ENCODE measurements at regions of chr9 and their contacts with region 1.

Region 1: DNA sequence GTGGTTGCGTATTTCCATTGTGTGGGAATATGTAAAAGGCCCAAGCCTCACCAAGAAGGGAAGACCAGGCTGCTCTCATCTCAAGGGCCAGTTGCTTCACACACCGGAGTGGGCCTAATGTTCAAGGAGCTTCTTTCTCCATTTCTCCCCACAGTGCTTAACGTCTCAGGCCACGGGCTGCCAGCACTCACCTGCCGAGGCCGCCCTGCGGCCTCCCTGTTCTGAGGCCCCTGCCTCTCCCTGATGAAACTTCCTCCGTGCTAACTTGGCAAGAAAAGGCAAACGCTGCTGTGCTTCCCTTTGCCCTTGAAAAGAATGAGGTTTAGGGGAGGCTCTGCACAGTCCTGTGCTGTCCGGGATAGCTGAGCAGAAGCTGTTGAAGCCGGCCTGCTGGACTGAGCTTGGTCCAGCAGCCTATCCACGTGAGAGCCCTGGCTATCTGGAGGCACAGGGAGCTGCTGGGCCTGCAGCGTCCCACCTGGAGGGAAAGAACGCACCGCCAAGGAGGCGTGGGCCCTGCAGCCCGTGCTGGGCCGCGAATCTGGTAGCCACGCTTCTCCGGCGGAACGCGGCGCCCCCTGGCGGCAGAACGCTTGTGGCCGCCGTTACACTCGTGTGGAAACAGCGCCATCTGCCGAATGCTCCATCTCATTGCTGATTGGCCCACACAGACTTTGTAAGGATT is 73.5 kb upstream of the PRSS3 start:
- DNase-seq: peak; percentile 66 to 91
- ATAC-seq: peak; percentile 86 to 87
- H3K4me3 ChIP-seq: no peak overlapping the region
- H3K27ac ChIP-seq: peak overlapping the region; percentile 50 to 75; a peak in 4 of 6 replicates
- H3K4me1 ChIP-seq: peaks cover 7% of the 10 kb centered on the region; the same call in 1 of the 3 replicates
- CTCF ChIP-seq: peak; percentile 100
- EP300 ChIP-seq: no peak
- POLR2A ChIP-seq: no peak
- RAD21 ChIP-seq: peak; percentile 100

Region 2: DNA sequence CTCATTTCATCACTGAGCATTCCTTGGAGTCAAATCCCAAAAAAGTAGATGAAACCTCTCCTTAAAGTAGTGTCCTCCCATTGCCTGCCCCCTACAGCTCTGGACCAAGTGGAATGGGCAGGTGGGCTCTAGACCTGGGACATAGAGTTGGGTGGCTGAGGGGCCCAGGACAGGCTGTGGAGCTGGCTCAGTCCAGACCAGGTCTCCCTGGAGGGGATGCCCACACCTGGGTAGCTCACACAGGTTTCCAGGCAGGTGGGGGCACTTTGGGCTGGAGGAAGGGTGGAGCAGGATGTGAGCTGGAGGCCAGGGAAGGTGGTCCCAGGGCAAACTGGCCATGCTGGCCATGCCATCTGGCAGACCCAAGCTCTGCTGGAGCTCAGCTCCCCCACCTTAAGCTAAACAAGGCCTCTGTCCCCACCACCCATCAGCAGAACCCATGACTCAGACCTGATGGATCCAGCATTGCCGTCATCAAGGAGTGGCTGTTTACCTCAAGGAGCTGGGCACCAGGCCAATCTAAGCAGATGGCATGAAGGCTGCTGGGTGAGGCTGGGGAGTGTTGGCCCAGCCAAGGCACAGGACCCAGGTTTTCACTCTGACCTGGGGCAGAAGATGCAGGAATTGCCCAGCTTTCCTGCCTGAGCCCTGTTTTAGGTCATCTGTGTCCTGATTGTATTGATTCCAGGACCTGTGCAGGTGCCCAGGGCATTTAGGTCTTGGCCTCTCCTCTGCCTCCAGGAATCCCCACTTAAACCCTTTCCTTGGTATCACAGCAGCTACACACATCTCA is 487.9 kb before region 1 on chr9:
- CTCF ChIA-PET with region 1: interaction called, 33 read pairs
- POLR2A ChIA-PET with region 1: no interaction called
- DNase-seq: peak; percentile 97 to 100
- ATAC-seq: peak; percentile 86
- H3K4me3 ChIP-seq: no peak overlapping the region
- H3K27ac ChIP-seq: peak overlapping the region; percentile 96 to 99
- H3K4me1 ChIP-seq: peaks cover 61% of the 10 kb centered on the region
- CTCF ChIP-seq: no peak
- EP300 ChIP-seq: peak; percentile 92 to 95; a peak in 4 of 5 replicates
- POLR2A ChIP-seq: peak; percentile 37; the same call in 1 of the 2 replicates
- RAD21 ChIP-seq: peak; percentile 32 to 53; a peak in 4 of 5 replicates

Region 3: GRCh38 chr9:33623658-33624586 is 97.9 kb before region 1 on chr9:
- CTCF ChIA-PET with region 1: interaction called, 471 read pairs
- POLR2A ChIA-PET with region 1: interaction called, 4 read pairs
- DNase-seq: peak; percentile 82 to 90
- ATAC-seq: peak; percentile 94 to 96
- H3K4me3 ChIP-seq: no peak overlapping the region
- H3K27ac ChIP-seq: peak overlapping the region; percentile 11 to 52; a peak in 2 of 6 replicates
- H3K4me1 ChIP-seq: peaks cover 23% of the 10 kb centered on the region
- CTCF ChIP-seq: peak; percentile 92
- EP300 ChIP-seq: no peak
- POLR2A ChIP-seq: no peak
- RAD21 ChIP-seq: peak; percentile 93

Region 4: DNA sequence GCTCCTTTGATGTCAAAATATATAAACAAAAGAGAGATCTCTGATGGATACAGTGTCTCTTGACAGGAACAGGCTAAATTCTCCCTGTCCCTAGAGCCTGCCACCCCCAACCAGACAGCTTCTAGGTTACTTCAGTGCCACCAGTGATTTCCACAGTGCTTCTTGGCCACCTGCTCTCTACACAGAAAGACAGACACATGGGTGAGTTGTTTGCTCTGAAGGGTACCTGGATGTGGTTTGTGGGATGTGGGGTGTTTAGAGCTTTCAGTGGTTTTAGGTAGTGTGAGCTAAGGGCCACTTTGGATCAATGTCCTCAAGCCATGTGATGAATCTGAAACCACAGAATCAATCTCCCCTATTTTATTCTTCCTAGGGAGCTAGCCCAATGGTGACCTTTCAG is 72.4 kb before region 1 on chr9:
- CTCF ChIA-PET with region 1: interaction called, 10 read pairs
- POLR2A ChIA-PET with region 1: no interaction called
- DNase-seq: no peak
- ATAC-seq: no peak
- H3K4me3 ChIP-seq: no peak overlapping the region
- H3K27ac ChIP-seq: no peak overlapping the region
- H3K4me1 ChIP-seq: no peaks in the 10 kb centered on the region
- CTCF ChIP-seq: no peak
- EP300 ChIP-seq: no peak
- POLR2A ChIP-seq: no peak
- RAD21 ChIP-seq: no peak

Region 5: DNA sequence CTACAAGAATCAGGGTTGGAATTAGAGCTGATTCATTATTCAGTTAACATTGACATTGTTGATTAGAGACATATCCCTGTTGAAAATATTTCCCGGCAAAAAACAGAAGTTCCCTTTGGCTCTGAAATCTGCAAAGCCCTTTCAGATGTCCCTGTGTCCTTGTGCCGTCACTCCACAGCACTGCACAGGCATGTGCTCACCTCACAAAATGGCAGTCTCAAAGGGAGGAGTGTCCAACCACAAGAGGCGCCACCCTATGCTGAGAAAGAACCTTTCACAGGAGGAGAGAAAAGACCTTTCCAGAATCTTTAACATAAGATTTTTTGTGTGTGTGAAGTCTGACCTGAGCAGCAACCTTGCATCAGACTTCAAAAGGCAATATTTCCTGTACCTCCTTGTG is 39.3 kb before region 1 on chr9:
- CTCF ChIA-PET with region 1: interaction called, 15 read pairs
- POLR2A ChIA-PET with region 1: no interaction called
- DNase-seq: no peak
- ATAC-seq: no peak
- H3K4me3 ChIP-seq: no peak overlapping the region
- H3K27ac ChIP-seq: no peak overlapping the region
- H3K4me1 ChIP-seq: peaks cover 3% of the 10 kb centered on the region
- CTCF ChIP-seq: no peak
- EP300 ChIP-seq: no peak
- POLR2A ChIP-seq: no peak
- RAD21 ChIP-seq: no peak

Region 6: GRCh38 chr9:33695856-33696255 is 26.0 kb before region 1 on chr9:
- CTCF ChIA-PET with region 1: interaction called, 18 read pairs
- POLR2A ChIA-PET with region 1: no interaction called
- DNase-seq: no peak
- ATAC-seq: no peak
- H3K4me3 ChIP-seq: no peak overlapping the region
- H3K27ac ChIP-seq: no peak overlapping the region
- H3K4me1 ChIP-seq: no peaks in the 10 kb centered on the region
- CTCF ChIP-seq: no peak
- EP300 ChIP-seq: no peak
- POLR2A ChIP-seq: no peak
- RAD21 ChIP-seq: no peak

Region 7: GRCh38 chr9:33737811-33738606 is 16.2 kb after region 1 on chr9:
- CTCF ChIA-PET with region 1: interaction called, 11 read pairs
- POLR2A ChIA-PET with region 1: no interaction called
- DNase-seq: peak; percentile 47 to 81
- ATAC-seq: peak; percentile 95 to 99
- H3K4me3 ChIP-seq: no peak overlapping the region
- H3K27ac ChIP-seq: peak overlapping the region in 1 of 2 experiments; percentile 38; a peak in 2 of 6 replicates
- H3K4me1 ChIP-seq: 0 out of 3 replicates have a peak, but pooled peaks cover 5% of the 10 kb centered on the region
- CTCF ChIP-seq: peak; percentile 88
- EP300 ChIP-seq: no peak
- POLR2A ChIP-seq: no peak
- RAD21 ChIP-seq: peak; percentile 85 to 89

Region 8: DNA sequence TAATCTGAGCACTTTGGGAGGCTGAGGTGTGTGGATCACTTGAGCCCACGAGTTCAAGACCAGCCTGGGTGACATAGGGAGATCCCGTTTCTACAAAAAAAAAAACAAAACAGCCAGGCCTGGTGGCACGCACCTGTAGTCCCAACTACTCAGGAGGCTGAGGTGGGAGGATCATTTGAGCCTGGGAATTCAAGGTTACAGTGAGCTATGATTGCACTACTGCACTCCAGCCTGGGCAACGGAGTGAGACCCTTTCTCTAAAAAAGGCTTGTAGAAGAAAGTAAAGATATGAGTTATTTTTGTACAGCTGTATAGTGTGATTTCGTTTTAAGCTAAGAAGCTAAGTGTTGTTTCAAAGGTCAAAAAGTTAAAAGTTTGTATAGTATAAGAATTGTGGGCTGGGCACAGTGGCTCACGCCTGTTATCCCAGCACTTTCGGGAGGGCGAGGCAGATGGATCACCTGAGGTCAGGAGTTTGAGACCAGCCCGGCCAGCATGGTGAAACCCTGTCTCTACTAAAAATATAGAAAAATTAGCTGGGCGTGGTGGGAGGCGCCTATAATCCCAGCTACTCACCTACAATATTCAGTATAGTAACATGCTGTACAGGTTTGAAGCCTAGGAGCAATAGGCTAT is 113.9 kb after region 1 on chr9:
- CTCF ChIA-PET with region 1: no interaction called
- POLR2A ChIA-PET with region 1: no interaction called
- DNase-seq: no peak
- ATAC-seq: no peak
- H3K4me3 ChIP-seq: no peak overlapping the region
- H3K27ac ChIP-seq: no peak overlapping the region
- H3K4me1 ChIP-seq: peaks cover 30% of the 10 kb centered on the region
- CTCF ChIP-seq: no peak
- EP300 ChIP-seq: no peak
- POLR2A ChIP-seq: no peak
- RAD21 ChIP-seq: no peak